K562 (cell line): ENCODE measurements at regions of chr12 and their contacts with region 1.

Region 1: DNA sequence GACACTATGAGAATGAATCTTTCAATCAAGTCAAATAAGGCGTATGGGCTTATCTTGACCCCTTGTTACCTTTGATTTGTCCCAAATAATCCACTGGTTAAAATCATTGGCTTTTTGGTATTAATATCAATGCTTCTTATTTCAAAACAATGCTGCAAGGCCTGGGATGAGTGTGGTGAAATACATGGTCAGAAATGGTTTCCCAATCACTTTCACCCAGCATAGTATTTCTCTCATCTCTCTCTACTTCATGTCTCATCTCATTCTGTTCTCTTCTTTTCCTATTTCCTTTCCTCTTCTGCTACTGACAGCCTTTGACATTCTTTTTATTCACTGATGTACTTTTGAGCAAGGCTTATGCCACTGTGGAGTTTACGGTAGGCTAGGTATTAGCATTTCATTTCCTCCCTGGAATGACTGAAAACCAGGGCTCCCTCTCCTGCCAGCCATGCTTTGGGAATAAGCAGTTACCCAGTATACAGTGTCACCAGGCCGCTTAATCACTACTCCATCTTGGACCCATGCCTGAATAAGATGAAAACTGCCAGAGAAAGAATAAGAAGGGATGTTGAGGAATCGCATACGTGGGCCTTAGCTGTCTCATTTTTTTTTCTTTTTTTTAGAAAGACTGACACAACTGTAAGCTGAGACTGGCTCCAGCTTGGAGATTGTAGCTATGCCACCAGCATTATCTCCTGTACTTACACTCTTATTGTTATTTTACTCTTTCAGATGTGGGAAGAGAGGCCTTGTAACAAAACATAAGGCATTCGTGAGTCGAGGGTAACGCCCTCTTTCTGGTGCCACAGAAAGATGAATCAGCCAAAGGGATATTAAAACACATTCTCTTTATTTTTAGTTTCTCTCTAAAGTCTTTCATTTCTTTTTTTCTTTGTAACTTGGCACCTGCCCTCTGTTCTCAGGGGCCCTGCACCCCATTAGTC is 53.5 kb downstream of the IGF1 start:
- DNase-seq: no peak
- ATAC-seq: no peak
- H3K4me3 ChIP-seq: no peak overlapping the region
- H3K27ac ChIP-seq: peak overlapping the region; percentile 50; the same call in 2 of the 3 replicates
- H3K4me1 ChIP-seq: peaks cover 10 to 65% of the 10 kb centered on the region in 2 experiments
- H3K27me3 ChIP-seq: no peaks in the 10 kb centered on the region
- CTCF ChIP-seq: no peak
- EP300 ChIP-seq: no peak
- POLR2A ChIP-seq: no peak
- RAD21 ChIP-seq: no peak

Region 2: GRCh38 chr12:102246016-102246415 is 180.9 kb before region 1 on chr12:
- CTCF ChIA-PET with region 1: no interaction called
- POLR2A ChIA-PET with region 1: no interaction called
- in situ Hi-C with region 1: no loop called
- intact Hi-C with region 1: no loop called
- DNase-seq: no peak
- ATAC-seq: no peak
- H3K4me3 ChIP-seq: no peak overlapping the region
- H3K27ac ChIP-seq: no peak overlapping the region
- H3K4me1 ChIP-seq: peaks cover 0 to 1% of the 10 kb centered on the region in 2 experiments; a peak in 1 of 5 replicates
- H3K27me3 ChIP-seq: no peaks in the 10 kb centered on the region
- CTCF ChIP-seq: no peak
- EP300 ChIP-seq: no peak
- POLR2A ChIP-seq: no peak
- RAD21 ChIP-seq: no peak

Region 3: GRCh38 chr12:102314821-102315220 is 112.0 kb before region 1 on chr12:
- CTCF ChIA-PET with region 1: no interaction called
- POLR2A ChIA-PET with region 1: no interaction called
- in situ Hi-C with region 1: no loop called
- intact Hi-C with region 1: loop called (anchors 5 kb)
- DNase-seq: peak in 1 of 4 experiments; percentile 23
- ATAC-seq: no peak
- H3K4me3 ChIP-seq: no peak overlapping the region
- H3K27ac ChIP-seq: no peak overlapping the region
- H3K4me1 ChIP-seq: peaks cover 0 to 5% of the 10 kb centered on the region in 2 experiments; a peak in 3 of 5 replicates
- H3K27me3 ChIP-seq: no peaks in the 10 kb centered on the region
- CTCF ChIP-seq: no peak
- EP300 ChIP-seq: no peak
- POLR2A ChIP-seq: no peak
- RAD21 ChIP-seq: no peak

Region 4: DNA sequence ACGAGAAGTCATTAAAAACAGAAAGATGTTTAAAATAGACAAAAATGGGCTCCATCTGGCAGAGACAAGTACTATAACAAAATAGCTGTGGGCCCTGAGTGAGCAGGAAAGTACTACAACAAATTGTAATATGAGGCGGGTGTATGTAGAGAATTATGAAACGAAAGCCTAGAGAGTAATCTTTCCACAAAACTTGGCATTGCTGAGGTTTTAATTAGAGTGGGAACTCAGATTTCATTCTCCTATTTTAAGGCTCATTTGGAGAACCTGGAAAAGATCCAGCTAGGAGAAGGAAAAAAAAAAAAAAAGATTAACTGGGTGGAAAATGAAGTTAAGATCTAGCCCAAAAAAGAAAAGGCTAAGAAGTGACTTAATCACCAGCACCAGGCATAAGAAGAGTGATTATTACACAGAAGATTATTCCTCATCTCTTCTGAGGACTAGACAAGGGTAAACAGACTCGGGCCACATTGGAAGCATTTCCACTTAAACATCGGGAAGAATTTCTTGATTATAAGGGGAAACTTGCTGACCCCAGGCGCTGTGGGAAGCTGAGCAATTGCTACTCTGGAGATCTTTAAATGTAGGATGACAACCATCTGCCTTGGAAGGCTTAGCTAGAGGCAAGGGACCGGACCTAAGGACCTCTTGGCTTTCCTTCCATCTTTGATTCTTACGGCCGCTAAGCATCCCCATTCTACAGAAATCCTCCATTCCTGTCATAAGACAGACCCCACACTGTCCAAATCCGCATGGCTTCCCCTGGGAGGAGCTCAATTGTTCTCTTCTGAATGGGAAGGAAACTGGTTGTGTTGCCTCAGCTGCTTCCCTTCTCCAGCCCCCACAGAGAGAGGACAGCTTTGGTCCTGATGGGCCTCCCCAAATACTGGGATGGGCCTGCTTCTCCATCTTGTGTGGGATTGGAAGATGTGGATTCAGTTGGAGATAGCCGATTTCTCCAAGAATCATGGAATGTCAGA is 12.8 kb after region 1 on chr12:
- CTCF ChIA-PET with region 1: no interaction called
- POLR2A ChIA-PET with region 1: interaction called, 10 read pairs
- in situ Hi-C with region 1: no loop called
- intact Hi-C with region 1: no loop called
- DNase-seq: no peak
- ATAC-seq: no peak
- H3K4me3 ChIP-seq: no peak overlapping the region
- H3K27ac ChIP-seq: peak overlapping the region; percentile 67; the same call in 1 of the 3 replicates
- H3K4me1 ChIP-seq: peaks cover 0 to 60% of the 10 kb centered on the region in 2 experiments; a peak in 4 of 5 replicates
- H3K27me3 ChIP-seq: no peaks in the 10 kb centered on the region
- CTCF ChIP-seq: no peak
- EP300 ChIP-seq: no peak
- POLR2A ChIP-seq: no peak
- RAD21 ChIP-seq: no peak

Region 5: GRCh38 chr12:102479099-102479887 is 52.4 kb after region 1 on chr12:
- CTCF ChIA-PET with region 1: no interaction called
- POLR2A ChIA-PET with region 1: no interaction called
- in situ Hi-C with region 1: no loop called
- intact Hi-C with region 1: loop called (anchors 2 kb)
- DNase-seq: peak in 1 of 4 experiments; percentile 37
- ATAC-seq: peak; percentile 12
- H3K4me3 ChIP-seq: peak overlapping the region; percentile 23
- H3K27ac ChIP-seq: peak overlapping the region; percentile 41; the same call in 1 of the 3 replicates
- H3K4me1 ChIP-seq: peaks cover 4 to 31% of the 10 kb centered on the region in 2 experiments; a peak in 4 of 5 replicates
- H3K27me3 ChIP-seq: no peaks in the 10 kb centered on the region
- CTCF ChIP-seq: no peak
- EP300 ChIP-seq: no peak
- POLR2A ChIP-seq: no peak
- RAD21 ChIP-seq: no peak